Heart left ventricle (tissue), 16 donors: ENCODE measurements at regions of chr15 and their contacts with region 1.

Region 1: GRCh38 chr15:81274931-81275707 is 48.8 kb downstream of the STARD5 start:
- DNase-seq: peak; percentile 74 to 83 (median 78)
- ATAC-seq: peak; percentile 62 to 94 (median 88)
- H3K4me3 ChIP-seq: no peak overlapping the region
- H3K27ac ChIP-seq: peak overlapping the region in 10 of 12 donors; percentile 12 to 70 (median 48)
- H3K4me1 ChIP-seq: peaks cover 0 to 16% (median 4%) of the 10 kb centered on the region in 12 donors
- H3K27me3 ChIP-seq: peaks cover 0 to 3% (median 0%) of the 10 kb centered on the region in 9 donors
- CTCF ChIP-seq: peak; percentile 65 to 90 (median 78)
- POLR2A ChIP-seq: no peak

Region 2: GRCh38 chr15:81336568-81336967 is 61.4 kb after region 1 on chr15:
- intact Hi-C with region 1: loop called in 4 of 10 experiments (anchors 5 kb)
- DNase-seq: no peak
- ATAC-seq: no peak
- H3K4me3 ChIP-seq: no peak overlapping the region
- H3K27ac ChIP-seq: no peak overlapping the region
- H3K4me1 ChIP-seq: peaks cover 0 to 34% (median 7%) of the 10 kb centered on the region in 12 donors
- H3K27me3 ChIP-seq: no peaks in the 10 kb centered on the region
- CTCF ChIP-seq: peak in 8 of 12 donors; percentile 9 to 36 (median 18)
- POLR2A ChIP-seq: no peak

Region 3: GRCh38 chr15:81394603-81395002 is 119.5 kb after region 1 on chr15:
- intact Hi-C with region 1: loop called in 2 of 10 experiments (anchors 2 kb)
- DNase-seq: no peak
- ATAC-seq: no peak
- H3K4me3 ChIP-seq: no peak overlapping the region
- H3K27ac ChIP-seq: no peak overlapping the region
- H3K4me1 ChIP-seq: no peaks in the 10 kb centered on the region
- H3K27me3 ChIP-seq: no peaks in the 10 kb centered on the region
- CTCF ChIP-seq: no peak
- POLR2A ChIP-seq: no peak